GM18951 (cell line): ENCODE measurements at regions of chr5 and their contacts with region 1.

Region 1: GRCh38 chr5:149731639-149732323 is 1.7 kb downstream of the PPARGC1B start:
- POLR2A ChIP-seq: peak; percentile 61

Region 2: DNA sequence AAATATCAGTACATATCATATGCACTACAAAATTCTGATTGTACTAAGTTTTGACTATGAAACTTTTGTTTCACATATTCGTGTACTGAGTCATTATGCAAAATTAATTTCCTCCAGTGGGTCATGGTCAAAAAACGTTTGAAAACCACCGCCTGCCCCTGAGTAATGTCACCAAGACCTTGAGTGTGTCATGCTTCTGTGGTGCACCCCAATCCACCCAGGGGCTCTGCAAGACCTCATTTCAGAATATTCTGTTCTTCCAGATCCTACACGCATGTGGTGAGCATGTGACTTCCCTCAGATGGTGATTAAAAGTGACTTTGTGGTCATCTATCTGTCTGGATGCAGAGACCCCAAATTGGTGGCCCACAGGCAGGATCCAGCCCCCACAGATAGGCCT is 559.5 kb before region 1 on chr5:
- in situ Hi-C with region 1: no loop called
- POLR2A ChIP-seq: no peak

Region 3: DNA sequence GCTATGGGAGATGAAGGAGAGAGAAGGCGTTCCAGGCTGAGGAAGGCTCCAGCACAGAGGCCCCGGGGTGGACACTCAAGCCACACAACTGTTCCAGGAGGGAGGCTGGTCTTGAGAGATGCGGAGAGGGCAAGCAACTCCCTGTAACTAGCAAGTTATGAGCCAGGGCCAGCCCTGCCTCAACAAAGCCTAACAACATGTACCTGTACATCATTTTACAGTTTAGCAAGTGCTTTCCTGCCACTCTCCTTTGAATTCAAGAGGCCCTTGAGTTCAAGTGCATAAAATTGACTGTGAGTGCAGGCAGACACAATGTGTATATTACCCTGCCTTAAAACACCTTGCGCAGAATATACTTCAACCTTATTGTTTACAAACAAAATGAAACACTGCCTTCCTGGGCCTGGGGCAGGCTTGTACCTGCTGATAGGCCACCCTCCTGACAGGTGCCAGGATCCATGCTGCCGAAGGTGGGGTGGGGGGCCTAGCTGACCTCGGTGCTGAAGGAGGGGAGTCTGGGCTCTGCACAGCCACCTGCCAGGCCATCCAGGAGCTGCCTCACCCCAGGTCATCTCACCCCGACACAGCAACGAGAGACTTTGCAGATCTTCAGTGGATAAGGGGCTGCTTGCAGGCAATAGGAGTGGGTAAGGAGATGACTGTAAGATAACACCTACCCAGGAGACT is 78.3 kb after region 1 on chr5:
- in situ Hi-C with region 1: loop called (anchors 10 kb)
- POLR2A ChIP-seq: no peak

Region 4: GRCh38 chr5:150217873-150218692 is 486.3 kb after region 1 on chr5:
- in situ Hi-C with region 1: no loop called
- POLR2A ChIP-seq: no peak

Region 5: GRCh38 chr5:150409638-150410523 is 678.1 kb after region 1 on chr5:
- in situ Hi-C with region 1: no loop called
- POLR2A ChIP-seq: peak; percentile 57